B cell (primary cell): ENCODE measurements at regions of chr1 and their contacts with region 1.

Region 1: GRCh38 chr1:55140546-55140983 is 74.6 kb downstream of the USP24 start:
- DNase-seq: peak; percentile 76
- ATAC-seq: peak; percentile 88
- H3K4me3 ChIP-seq: no peak overlapping the region
- H3K4me3 Mint-ChIP-seq: no peak overlapping the region
- H3K27ac ChIP-seq: no peak overlapping the region
- H3K27ac Mint-ChIP-seq: no peak overlapping the region
- H3K4me1 ChIP-seq: no peaks in the 10 kb centered on the region
- H3K4me1 Mint-ChIP-seq: peaks cover 3% of the 10 kb centered on the region
- H3K27me3 ChIP-seq: no peaks in the 10 kb centered on the region
- H3K27me3 Mint-ChIP-seq: no peaks in the 10 kb centered on the region
- CTCF ChIP-seq: peak; percentile 87

Region 2: DNA sequence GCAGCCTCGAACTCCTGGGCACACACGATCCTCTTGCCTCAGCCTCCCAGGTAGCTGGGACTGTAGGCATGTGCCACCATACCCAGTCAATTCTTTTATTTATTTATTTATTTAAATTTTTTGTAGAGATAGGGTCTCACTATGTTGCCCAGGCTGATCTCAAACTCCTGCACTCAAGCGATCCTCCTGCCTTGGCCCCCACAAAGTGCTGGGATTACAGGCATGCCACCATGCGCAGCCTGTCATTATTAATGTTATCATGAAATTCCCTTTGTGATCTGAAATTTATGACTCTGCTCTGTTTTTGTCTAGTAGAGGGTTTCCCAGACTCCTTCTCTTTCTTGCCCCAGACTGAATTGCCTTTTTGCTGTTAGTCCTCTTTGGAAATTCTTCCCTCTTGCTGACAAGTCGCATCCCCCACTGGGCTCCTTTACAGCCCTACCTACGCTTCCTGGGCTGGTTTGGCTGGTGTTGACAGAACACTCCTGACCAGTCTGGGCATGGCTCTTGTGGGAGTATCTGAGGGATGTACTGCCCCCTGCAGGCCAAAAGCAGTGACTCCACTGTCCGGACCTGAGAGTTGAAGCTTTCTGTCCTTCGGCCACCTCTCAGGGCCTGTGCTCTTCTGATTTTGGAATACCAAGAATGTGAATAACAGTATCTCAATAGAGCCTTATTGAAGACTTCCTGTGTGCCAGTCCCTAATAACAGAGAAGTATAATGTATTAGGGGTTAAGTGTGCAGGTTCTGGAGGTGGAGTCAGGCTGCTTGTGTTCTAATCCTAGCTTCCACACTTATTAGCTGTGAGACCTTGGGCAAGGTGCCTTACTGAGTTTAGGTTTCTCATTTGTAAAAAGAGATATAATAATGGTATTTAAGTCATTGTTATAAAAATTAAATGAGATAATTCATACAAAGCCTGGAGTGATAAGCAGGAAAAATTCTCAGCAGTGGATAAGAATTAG is 1059.0 kb before region 1 on chr1:
- CTCF ChIA-PET with region 1: no interaction called
- POLR2A ChIA-PET with region 1: no interaction called
- intact Hi-C with region 1: no loop called
- DNase-seq: peak; percentile 61
- ATAC-seq: peak; percentile 69
- H3K4me3 ChIP-seq: no peak overlapping the region
- H3K4me3 Mint-ChIP-seq: no peak overlapping the region
- H3K27ac ChIP-seq: no peak overlapping the region
- H3K27ac Mint-ChIP-seq: no peak overlapping the region
- H3K4me1 ChIP-seq: no peaks in the 10 kb centered on the region
- H3K4me1 Mint-ChIP-seq: peaks cover 4% of the 10 kb centered on the region
- H3K27me3 ChIP-seq: no peaks in the 10 kb centered on the region
- H3K27me3 Mint-ChIP-seq: no peaks in the 10 kb centered on the region
- CTCF ChIP-seq: peak; percentile 74

Region 3: GRCh38 chr1:54738244-54738643 is 402.3 kb before region 1 on chr1:
- CTCF ChIA-PET with region 1: no interaction called
- POLR2A ChIA-PET with region 1: no interaction called
- intact Hi-C with region 1: no loop called
- DNase-seq: no peak
- ATAC-seq: no peak
- H3K4me3 ChIP-seq: no peak overlapping the region
- H3K4me3 Mint-ChIP-seq: no peak overlapping the region
- H3K27ac ChIP-seq: no peak overlapping the region
- H3K27ac Mint-ChIP-seq: no peak overlapping the region
- H3K4me1 ChIP-seq: no peaks in the 10 kb centered on the region
- H3K4me1 Mint-ChIP-seq: no peaks in the 10 kb centered on the region
- H3K27me3 ChIP-seq: no peaks in the 10 kb centered on the region
- H3K27me3 Mint-ChIP-seq: no peaks in the 10 kb centered on the region
- CTCF ChIP-seq: no peak

Region 4: DNA sequence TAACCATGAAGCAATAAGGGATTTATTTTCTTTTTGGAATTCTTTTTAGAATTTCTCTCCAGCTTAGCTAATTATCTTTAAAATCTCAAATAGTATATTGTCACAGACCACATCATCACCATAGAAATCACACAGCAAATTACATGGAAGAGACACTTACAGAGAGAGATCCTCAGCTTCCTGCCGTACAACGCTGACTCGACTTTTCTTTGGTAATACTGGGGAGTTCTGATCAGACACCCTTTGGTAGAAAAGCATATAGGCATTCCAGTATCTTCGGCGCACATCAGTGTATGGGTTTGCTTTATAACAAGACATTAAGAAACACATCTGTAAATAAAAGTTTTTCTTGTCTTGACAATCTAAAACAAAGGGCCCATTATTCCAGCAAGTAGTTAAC is 45.5 kb before region 1 on chr1:
- CTCF ChIA-PET with region 1: interaction called, 3 read pairs
- POLR2A ChIA-PET with region 1: no interaction called
- intact Hi-C with region 1: loop called (anchors 5 kb)
- DNase-seq: no peak
- ATAC-seq: no peak
- H3K4me3 ChIP-seq: no peak overlapping the region
- H3K4me3 Mint-ChIP-seq: no peak overlapping the region
- H3K27ac ChIP-seq: no peak overlapping the region
- H3K27ac Mint-ChIP-seq: no peak overlapping the region
- H3K4me1 ChIP-seq: no peaks in the 10 kb centered on the region
- H3K4me1 Mint-ChIP-seq: no peaks in the 10 kb centered on the region
- H3K27me3 ChIP-seq: no peaks in the 10 kb centered on the region
- H3K27me3 Mint-ChIP-seq: no peaks in the 10 kb centered on the region
- CTCF ChIP-seq: no peak

Region 5: GRCh38 chr1:55150880-55151588 is 10.5 kb after region 1 on chr1:
- CTCF ChIA-PET with region 1: interaction called, 10 read pairs
- POLR2A ChIA-PET with region 1: no interaction called
- intact Hi-C with region 1: no loop called
- DNase-seq: peak; percentile 48
- ATAC-seq: peak; percentile 53
- H3K4me3 ChIP-seq: peak overlapping the region in 2 of 5 experiments; percentile 2 to 16
- H3K4me3 Mint-ChIP-seq: peak overlapping the region; percentile 24
- H3K27ac ChIP-seq: peak overlapping the region; percentile 58 to 86
- H3K27ac Mint-ChIP-seq: peak overlapping the region; percentile 62
- H3K4me1 ChIP-seq: peaks cover 14% of the 10 kb centered on the region in 2 donors
- H3K4me1 Mint-ChIP-seq: peaks cover 17% of the 10 kb centered on the region
- H3K27me3 ChIP-seq: no peaks in the 10 kb centered on the region
- H3K27me3 Mint-ChIP-seq: no peaks in the 10 kb centered on the region
- CTCF ChIP-seq: no peak

Region 6: DNA sequence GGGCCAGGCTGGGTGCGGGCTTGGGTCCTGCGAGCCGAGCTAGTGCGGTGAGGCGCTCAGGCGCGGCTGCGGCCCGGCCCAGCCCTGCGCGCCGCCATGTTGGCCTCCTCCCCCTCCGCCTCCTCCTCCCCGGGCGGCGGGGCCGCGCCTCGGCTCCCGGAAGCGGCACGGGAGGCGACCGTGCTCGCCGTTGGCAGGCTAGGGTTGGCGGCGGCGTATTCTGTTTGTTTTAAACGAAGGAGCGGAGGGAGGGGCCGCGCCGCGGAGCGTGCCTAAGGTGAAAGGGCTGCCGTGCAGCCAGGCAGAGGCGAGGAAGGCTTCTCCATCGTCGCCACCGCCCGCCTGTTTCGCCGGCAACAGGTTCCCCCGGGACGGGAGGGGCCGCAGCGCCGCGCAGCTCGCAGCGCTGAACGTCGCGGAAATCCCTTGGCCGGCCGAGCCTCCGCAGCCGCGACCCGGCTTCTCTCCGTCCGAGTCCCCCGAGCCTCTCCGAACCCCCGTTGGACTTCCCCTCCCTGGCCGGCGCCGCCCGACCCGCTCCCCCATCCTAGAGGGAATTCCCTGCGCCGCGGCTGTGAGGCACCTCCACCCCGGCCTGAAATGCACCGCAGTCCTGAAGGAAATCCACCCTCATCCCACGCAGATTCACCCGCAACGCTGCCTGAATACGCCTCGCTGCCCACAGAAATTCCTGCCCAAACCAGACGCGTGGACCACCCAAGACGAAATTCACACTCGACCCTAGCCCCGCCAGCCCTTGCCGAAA is 74.9 kb after region 1 on chr1 and contains the start of gene USP24:
- CTCF ChIA-PET with region 1: interaction called, 3 read pairs
- POLR2A ChIA-PET with region 1: no interaction called
- intact Hi-C with region 1: loop called (anchors 2 kb)
- DNase-seq: peak; percentile 90
- ATAC-seq: peak; percentile 74
- H3K4me3 ChIP-seq: peak within 1 kb of the TSS; percentile 72 to 83 (median 79)
- H3K4me3 Mint-ChIP-seq: peak within 1 kb of the TSS; percentile 98
- H3K27ac ChIP-seq: peak within 1 kb of the TSS; percentile 95 to 97
- H3K27ac Mint-ChIP-seq: peak within 1 kb of the TSS; percentile 99
- H3K4me1 ChIP-seq: peaks cover 54 to 59% of the 10 kb centered on the region in 2 donors
- H3K4me1 Mint-ChIP-seq: peaks cover 64% of the 10 kb centered on the region
- H3K27me3 ChIP-seq: no peaks in the 10 kb centered on the region
- H3K27me3 Mint-ChIP-seq: no peaks in the 10 kb centered on the region
- CTCF ChIP-seq: no peak
- total RNA-seq, gene USP24: 152 and 183 TPM in 2 replicates

Region 7: DNA sequence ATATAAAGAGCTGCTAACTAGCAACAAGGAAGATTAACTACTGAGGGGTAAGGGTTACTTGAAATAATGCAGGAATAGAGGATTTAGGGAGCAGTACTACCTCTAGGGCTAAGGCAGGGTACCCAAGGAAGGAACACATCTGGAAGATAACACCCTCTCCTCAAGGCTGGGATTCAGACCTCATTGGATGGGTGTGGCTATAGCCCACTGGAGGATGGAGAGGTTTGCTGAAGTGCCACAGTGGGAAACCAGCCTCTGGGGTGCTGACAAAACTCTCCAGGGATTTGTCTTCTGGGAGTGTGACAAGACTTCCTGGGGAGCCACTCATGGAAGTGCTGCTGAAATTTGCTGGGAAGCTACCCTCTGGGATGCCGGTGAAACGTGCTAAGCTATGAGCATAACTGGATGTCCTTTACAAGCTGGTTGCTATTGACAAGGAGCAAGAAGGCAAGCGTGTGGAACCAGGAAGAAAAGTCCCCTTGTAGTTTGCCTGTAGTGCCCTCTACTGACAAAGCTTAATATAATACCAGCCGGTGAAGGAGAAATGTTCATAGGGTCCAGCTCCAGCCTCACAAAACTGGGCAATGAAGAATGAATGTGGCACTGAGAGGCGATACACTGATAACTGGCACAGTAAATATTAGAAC is 197.4 kb after region 1 on chr1:
- CTCF ChIA-PET with region 1: interaction called, 16 read pairs
- POLR2A ChIA-PET with region 1: no interaction called
- intact Hi-C with region 1: loop called (anchors 1 kb)
- DNase-seq: peak; percentile 34
- ATAC-seq: no peak
- H3K4me3 ChIP-seq: no peak overlapping the region
- H3K4me3 Mint-ChIP-seq: no peak overlapping the region
- H3K27ac ChIP-seq: no peak overlapping the region
- H3K27ac Mint-ChIP-seq: no peak overlapping the region
- H3K4me1 ChIP-seq: no peaks in the 10 kb centered on the region
- H3K4me1 Mint-ChIP-seq: peaks cover 3% of the 10 kb centered on the region
- H3K27me3 ChIP-seq: no peaks in the 10 kb centered on the region
- H3K27me3 Mint-ChIP-seq: peaks cover 11% of the 10 kb centered on the region
- CTCF ChIP-seq: peak; percentile 40

Region 8: GRCh38 chr1:55519937-55520683 is 379.5 kb after region 1 on chr1:
- CTCF ChIA-PET with region 1: no interaction called
- POLR2A ChIA-PET with region 1: no interaction called
- intact Hi-C with region 1: no loop called
- DNase-seq: no peak
- ATAC-seq: no peak
- H3K4me3 ChIP-seq: no peak overlapping the region
- H3K4me3 Mint-ChIP-seq: no peak overlapping the region
- H3K27ac ChIP-seq: no peak overlapping the region
- H3K27ac Mint-ChIP-seq: no peak overlapping the region
- H3K4me1 ChIP-seq: no peaks in the 10 kb centered on the region
- H3K4me1 Mint-ChIP-seq: no peaks in the 10 kb centered on the region
- H3K27me3 ChIP-seq: peaks cover 0 to 2% (median 0%) of the 10 kb centered on the region in 4 experiments
- H3K27me3 Mint-ChIP-seq: peaks cover 26% of the 10 kb centered on the region
- CTCF ChIP-seq: no peak